GM12878 (cell line): ENCODE measurements at regions of chr1 and their contacts with region 1.

Region 1: DNA sequence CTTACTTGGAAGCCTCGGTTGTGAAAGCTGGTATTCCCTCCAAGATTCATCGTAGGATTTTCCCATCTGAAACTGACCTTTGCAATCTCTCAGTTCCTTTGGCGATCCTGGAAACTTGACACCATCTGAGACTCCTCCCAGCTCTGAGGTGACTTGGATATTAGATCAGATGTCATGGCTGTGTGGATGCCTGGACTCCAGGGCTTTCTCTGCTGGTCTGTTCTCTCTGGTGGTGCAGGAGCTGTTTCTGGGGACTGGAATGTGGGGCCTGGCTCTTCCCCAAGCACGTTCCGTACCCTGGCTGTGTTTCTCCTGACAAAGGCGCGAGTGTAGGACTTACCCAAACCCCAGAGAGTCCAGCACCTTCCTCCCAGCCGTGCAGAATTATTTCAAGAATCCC is 252.2 kb downstream of the RPS6KC1 start:
- DNase-seq: no peak
- ATAC-seq: no peak
- H3K4me3 ChIP-seq: no peak overlapping the region
- H3K27ac ChIP-seq: no peak overlapping the region
- H3K4me1 ChIP-seq: no peaks in the 10 kb centered on the region
- H3K27me3 ChIP-seq: no peaks in the 10 kb centered on the region
- CTCF ChIP-seq: no peak
- EP300 ChIP-seq: no peak
- POLR2A ChIP-seq: no peak
- RAD21 ChIP-seq: no peak

Region 2: GRCh38 chr1:213287987-213288386 is 15.3 kb before region 1 on chr1:
- CTCF ChIA-PET with region 1: no interaction called
- POLR2A ChIA-PET with region 1: no interaction called
- RAD21 ChIA-PET with region 1: no interaction called
- SMC1A ChIA-PET with region 1: no interaction called
- in situ Hi-C with region 1: no loop called
- intact Hi-C with region 1: loop called (anchors 2 kb)
- DNase-seq: no peak
- ATAC-seq: no peak
- H3K4me3 ChIP-seq: no peak overlapping the region
- H3K27ac ChIP-seq: no peak overlapping the region
- H3K4me1 ChIP-seq: no peaks in the 10 kb centered on the region
- H3K27me3 ChIP-seq: no peaks in the 10 kb centered on the region
- CTCF ChIP-seq: no peak
- EP300 ChIP-seq: no peak
- POLR2A ChIP-seq: no peak
- RAD21 ChIP-seq: no peak

Region 3: GRCh38 chr1:213399695-213400094 is 96.4 kb after region 1 on chr1:
- CTCF ChIA-PET with region 1: no interaction called
- POLR2A ChIA-PET with region 1: no interaction called
- RAD21 ChIA-PET with region 1: no interaction called
- SMC1A ChIA-PET with region 1: no interaction called
- in situ Hi-C with region 1: no loop called
- intact Hi-C with region 1: no loop called
- DNase-seq: no peak
- ATAC-seq: no peak
- H3K4me3 ChIP-seq: no peak overlapping the region
- H3K27ac ChIP-seq: no peak overlapping the region
- H3K4me1 ChIP-seq: no peaks in the 10 kb centered on the region
- H3K27me3 ChIP-seq: no peaks in the 10 kb centered on the region
- CTCF ChIP-seq: no peak
- EP300 ChIP-seq: no peak
- POLR2A ChIP-seq: no peak
- RAD21 ChIP-seq: no peak